ENCODE measurements at regions of chr7 and their contacts with region 1.

Region 1: GRCh38 chr7:87797798-87798403 is 78.3 kb downstream of the SLC25A40 start:
- DNase-seq: no peak
- H3K4me3 Mint-ChIP-seq: no peak overlapping the region
- H3K27ac Mint-ChIP-seq: no peak overlapping the region
- H3K4me1 Mint-ChIP-seq: no peaks in the 10 kb centered on the region
- H3K27me3 Mint-ChIP-seq: peaks cover under 1% of the 10 kb centered on the region

Region 2: DNA sequence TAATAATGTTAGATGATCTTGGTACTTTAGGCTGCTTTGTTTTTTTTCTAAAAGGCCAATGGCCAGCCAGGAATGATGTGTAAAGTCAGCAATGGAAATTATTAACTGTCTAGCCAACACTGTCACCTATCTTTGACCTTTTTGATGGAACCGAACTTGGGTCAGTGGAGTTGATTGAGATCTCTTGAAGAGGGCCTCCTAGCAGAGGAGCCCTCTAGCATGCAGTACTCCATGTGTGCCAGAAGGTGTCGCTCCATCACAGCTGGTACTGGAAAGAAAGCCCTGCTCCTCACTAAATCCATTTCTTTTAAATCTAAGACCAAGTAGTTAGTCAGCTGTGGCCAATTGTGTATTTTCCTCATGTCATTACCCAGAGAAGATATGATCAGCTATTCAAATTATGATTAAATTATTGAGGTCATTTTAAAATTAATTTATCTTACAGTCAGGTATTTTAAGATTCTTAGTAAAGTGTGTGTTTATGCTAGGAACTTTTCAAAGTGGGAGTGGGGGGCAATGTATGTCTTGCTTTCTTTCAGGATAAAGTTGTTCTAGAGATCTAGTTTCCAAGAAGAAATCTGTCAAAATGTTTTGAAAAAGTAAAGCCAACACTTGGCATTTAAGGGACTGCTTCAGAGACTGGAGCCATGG is 485.6 kb before region 1 on chr7:
- CTCF ChIA-PET with region 1: no interaction called
- intact Hi-C with region 1: loop called (anchors 10 kb)
- DNase-seq: peak; percentile 58
- H3K4me3 Mint-ChIP-seq: no peak overlapping the region
- H3K27ac Mint-ChIP-seq: no peak overlapping the region
- H3K4me1 Mint-ChIP-seq: no peaks in the 10 kb centered on the region
- H3K27me3 Mint-ChIP-seq: no peaks in the 10 kb centered on the region

Region 3: GRCh38 chr7:87833130-87833529 is 35.2 kb after region 1 on chr7:
- CTCF ChIA-PET with region 1: no interaction called
- intact Hi-C with region 1: no loop called
- DNase-seq: no peak
- H3K4me3 Mint-ChIP-seq: no peak overlapping the region
- H3K27ac Mint-ChIP-seq: no peak overlapping the region
- H3K4me1 Mint-ChIP-seq: no peaks in the 10 kb centered on the region
- H3K27me3 Mint-ChIP-seq: no peaks in the 10 kb centered on the region

Region 4: DNA sequence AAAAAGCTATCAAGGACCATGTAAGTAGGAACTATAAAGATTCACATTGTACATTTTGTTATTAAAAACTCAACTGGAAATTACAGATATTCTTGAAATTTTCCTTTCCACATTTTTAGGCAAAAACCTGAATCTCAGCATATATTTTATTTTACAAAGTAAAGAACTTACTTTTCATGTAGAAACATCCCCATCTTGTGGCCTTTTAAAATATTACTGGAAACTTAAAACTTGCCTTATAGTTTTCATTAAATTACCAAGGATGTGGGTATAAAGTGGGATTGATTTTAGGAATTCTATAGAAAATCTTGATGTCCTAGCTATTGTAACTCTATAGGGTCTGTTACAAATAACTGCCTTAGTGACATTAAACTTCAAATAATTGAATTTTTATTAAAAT is 89.0 kb after region 1 on chr7:
- CTCF ChIA-PET with region 1: interaction called, 7 read pairs
- intact Hi-C with region 1: loop called (anchors 1 kb)
- DNase-seq: no peak
- H3K4me3 Mint-ChIP-seq: no peak overlapping the region
- H3K27ac Mint-ChIP-seq: no peak overlapping the region
- H3K4me1 Mint-ChIP-seq: peaks cover 6% of the 10 kb centered on the region
- H3K27me3 Mint-ChIP-seq: no peaks in the 10 kb centered on the region

Region 5: GRCh38 chr7:87933945-87934698 is 136.2 kb after region 1 on chr7 and contains the start of gene ADAM22:
- CTCF ChIA-PET with region 1: interaction called, 4 read pairs
- intact Hi-C with region 1: loop called (anchors 5 kb)
- DNase-seq: peak; percentile 85
- H3K4me3 Mint-ChIP-seq: peak within 1 kb of the TSS; percentile 84
- H3K27ac Mint-ChIP-seq: no peak within 1 kb of the TSS
- H3K4me1 Mint-ChIP-seq: peaks cover 10% of the 10 kb centered on the region
- H3K27me3 Mint-ChIP-seq: peaks cover 7% of the 10 kb centered on the region
- total RNA-seq, gene ADAM22: 1.2 to 1.9 TPM

Region 6: DNA sequence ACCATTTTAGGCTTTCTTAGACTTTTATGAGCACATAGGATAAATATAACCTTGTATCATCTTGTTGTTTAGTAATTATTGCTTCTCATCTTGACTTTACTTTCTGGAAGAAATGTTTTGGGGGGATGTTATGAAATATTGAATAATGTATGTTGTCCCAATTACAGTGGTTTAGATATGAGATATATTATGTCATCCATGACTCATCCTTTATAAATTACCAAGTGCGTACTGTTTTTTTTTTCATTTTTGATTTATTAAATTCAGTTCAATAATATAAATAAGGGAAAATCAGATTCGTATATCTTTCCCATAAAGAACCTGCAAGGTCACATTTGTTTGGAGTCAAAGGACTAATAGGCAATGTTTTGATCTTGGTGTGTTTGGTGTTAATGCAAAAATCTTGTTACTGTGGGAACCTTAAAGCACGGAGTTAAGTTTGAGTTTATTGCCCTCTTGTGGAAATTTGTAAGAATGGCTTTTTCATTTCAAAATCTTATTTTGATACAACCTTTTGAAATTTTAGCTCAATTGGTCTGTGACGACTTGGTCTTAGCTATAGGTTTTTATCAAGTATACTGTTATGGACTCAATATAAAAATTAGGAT is 313.3 kb after region 1 on chr7:
- CTCF ChIA-PET with region 1: interaction called, 7 read pairs
- intact Hi-C with region 1: loop called (anchors 1 kb)
- DNase-seq: no peak
- H3K4me3 Mint-ChIP-seq: no peak overlapping the region
- H3K27ac Mint-ChIP-seq: no peak overlapping the region
- H3K4me1 Mint-ChIP-seq: peaks cover 4% of the 10 kb centered on the region
- H3K27me3 Mint-ChIP-seq: no peaks in the 10 kb centered on the region

Region 7: DNA sequence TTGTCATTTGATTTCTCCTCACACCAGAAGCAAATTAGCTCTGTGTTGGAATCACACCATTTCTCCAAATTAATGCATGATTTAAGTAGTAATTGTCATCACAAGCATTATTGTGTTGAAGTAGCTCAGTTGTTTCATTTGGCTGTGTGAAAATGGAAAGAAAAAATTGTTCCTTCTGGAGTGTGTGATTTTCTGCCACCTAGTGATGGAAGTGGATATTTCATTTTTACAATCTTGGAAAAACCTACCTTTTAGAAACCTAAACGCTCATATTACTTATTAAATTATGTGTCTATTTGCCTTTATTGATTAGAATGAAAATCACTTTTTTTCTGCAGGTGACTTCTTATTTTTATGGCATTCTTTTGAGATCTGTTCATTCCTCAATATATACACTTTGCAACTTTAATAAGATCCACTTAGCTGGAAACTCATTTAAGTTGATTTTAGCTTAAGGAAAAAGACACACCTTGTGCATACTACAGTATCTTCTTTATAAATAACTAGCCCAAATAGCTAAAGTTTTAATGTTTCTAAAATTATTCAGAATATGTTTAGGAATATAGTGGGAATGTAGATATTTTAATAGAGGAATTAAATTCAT is 371.9 kb after region 1 on chr7:
- CTCF ChIA-PET with region 1: interaction called, 3 read pairs
- intact Hi-C with region 1: loop called (anchors 1 kb)
- DNase-seq: no peak
- H3K4me3 Mint-ChIP-seq: no peak overlapping the region
- H3K27ac Mint-ChIP-seq: no peak overlapping the region
- H3K4me1 Mint-ChIP-seq: no peaks in the 10 kb centered on the region
- H3K27me3 Mint-ChIP-seq: no peaks in the 10 kb centered on the region

Region 8: DNA sequence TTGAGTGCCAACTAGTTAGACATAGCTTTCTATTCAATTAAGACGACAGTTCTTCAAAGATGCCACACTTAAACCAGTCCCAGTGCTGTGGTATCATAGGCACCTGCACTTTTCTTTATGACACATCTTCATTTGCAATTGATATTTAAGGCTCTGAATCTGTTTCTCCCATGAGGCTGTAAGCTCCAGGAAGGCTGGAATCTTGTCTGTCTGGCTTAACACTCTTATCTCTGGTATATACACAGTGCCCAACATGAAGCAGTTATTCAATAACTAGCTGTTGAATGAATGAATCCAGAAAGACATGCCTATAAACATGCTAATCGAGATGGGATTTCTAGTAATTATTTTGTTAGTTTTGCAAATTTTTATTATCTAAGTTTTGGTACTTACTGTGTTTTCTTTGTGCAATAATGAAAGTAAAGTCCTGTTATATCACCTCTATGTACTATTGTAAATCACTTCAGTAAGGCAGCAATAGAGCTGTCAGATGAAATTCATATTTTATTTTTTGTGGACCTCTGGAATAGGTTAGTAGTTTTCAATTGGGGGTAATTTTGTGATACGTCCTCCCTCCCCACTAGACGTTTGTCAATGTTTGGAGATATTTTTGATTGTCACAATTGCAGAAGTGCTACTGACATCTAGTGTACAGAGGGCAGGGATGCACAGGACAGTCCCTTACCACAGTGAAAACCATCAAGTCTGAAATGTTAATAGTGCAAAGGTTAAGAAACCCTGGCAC is 560.1 kb after region 1 on chr7:
- CTCF ChIA-PET with region 1: no interaction called
- intact Hi-C with region 1: loop called (anchors 5 kb)
- DNase-seq: no peak
- H3K4me3 Mint-ChIP-seq: no peak overlapping the region
- H3K27ac Mint-ChIP-seq: no peak overlapping the region
- H3K4me1 Mint-ChIP-seq: no peaks in the 10 kb centered on the region
- H3K27me3 Mint-ChIP-seq: peaks cover 9% of the 10 kb centered on the region